ENCODE measurements at regions of chr7 and their contacts with region 1.

Region 1: DNA sequence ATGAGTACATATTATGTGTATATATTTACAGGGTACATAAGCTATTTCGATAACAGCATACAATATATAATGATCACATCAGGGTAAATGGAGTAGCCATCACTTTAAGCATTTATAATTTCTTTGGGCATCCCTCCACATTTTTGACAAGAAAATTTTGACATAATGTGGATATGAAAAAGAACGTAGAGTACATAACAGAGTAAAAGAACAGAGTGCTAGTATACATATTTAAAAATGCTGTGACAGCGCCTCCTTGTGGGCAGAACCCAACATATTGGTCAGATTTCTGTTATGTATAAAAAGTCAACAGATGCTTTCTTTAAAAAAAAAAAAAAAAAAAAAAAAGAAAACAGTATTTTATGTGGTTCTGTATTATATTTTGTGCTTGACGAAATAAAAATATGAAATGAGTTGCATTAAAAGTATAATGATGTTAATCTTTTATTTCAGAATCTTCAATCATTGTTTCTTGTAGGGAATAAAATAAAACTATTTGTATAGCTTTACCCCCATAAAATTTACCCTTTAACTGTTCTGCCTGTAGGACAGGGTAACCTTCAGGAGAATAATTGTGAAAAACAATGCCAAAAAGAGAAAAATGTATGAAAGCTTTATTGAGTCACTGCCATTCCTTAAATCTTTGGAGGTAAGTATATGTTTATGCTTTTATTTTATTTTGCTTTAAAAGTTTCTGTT is 18.3 kb upstream of the HBP1 start:
- H3K4me3 Mint-ChIP-seq: no peak overlapping the region
- H3K27ac Mint-ChIP-seq: no peak overlapping the region
- H3K4me1 Mint-ChIP-seq: no peaks in the 10 kb centered on the region
- H3K27me3 Mint-ChIP-seq: no peaks in the 10 kb centered on the region

Region 2: DNA sequence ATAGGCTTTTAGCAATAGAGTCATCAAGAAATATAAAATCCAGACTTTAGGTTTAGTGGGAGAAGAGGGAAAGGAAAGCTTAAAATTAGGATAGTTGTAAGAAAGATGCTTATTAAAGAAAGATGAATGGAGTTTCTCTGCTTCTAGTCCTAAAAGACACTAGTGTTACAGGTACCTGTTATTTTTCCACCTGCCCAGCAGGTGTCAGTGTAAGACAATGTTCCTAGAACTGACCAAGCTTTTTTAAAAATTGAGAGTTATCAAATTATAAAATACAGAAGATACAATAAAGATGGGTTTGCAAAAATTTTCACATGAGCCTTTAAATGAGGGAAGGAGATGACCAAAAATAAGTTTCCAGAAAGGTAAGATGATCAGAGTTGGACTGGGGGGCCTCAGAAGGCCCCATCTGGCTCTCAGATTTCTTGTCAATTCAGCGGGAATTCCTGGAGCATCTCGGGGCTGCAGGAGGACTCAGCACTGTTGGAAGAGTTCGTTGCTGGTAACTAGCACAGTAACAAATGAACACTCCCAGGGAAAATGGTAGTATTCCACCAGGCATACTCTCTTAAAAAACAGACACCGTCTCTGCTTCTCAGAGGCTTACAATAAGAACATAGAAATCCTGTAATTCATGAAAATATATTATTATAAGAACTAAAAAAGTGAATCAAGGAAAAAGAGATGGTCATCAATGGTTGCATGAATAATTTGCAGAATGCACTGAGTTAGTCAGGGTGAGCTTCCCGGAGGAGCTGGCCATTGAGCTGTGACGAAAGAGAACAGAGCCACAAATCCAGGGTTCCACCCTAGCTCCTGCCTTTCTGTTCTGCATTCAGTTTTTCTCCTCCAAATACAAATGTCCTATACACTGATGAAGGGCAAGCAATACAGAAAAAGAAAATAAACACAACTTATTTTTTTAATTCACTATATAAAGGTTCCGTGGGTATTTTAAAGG is 357.2 kb before region 1 on chr7:
- intact Hi-C with region 1: loop called (anchors 5 kb)
- H3K4me3 Mint-ChIP-seq: no peak overlapping the region
- H3K27ac Mint-ChIP-seq: no peak overlapping the region
- H3K4me1 Mint-ChIP-seq: no peaks in the 10 kb centered on the region
- H3K27me3 Mint-ChIP-seq: peaks cover 6% of the 10 kb centered on the region

Region 3: DNA sequence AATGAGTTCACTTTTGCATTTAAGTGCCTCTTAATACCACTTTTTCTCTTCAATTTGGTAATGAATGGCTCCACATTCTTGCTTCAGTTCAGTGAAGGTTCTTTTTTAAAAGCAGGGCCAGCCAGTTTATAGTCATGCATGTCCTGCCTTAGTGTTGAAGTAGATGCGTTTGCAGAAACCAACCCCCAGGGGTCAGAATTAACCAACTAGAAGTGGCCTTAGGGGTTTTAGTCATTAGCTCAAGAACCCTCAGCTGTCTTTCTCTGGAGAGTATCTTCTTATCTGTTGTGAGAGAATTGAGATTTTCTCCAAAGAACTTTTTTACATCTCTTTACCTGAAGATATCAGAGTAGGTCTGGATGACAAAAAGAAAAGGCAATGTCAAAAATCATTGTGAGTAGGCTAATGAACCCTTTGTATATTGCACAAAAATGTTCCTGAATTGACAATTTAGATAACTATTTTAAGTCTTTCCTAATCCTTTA is 203.2 kb before region 1 on chr7:
- intact Hi-C with region 1: loop called (anchors 1 kb)
- H3K4me3 Mint-ChIP-seq: no peak overlapping the region
- H3K27ac Mint-ChIP-seq: no peak overlapping the region
- H3K4me1 Mint-ChIP-seq: peaks cover 17% of the 10 kb centered on the region
- H3K27me3 Mint-ChIP-seq: no peaks in the 10 kb centered on the region

Region 4: DNA sequence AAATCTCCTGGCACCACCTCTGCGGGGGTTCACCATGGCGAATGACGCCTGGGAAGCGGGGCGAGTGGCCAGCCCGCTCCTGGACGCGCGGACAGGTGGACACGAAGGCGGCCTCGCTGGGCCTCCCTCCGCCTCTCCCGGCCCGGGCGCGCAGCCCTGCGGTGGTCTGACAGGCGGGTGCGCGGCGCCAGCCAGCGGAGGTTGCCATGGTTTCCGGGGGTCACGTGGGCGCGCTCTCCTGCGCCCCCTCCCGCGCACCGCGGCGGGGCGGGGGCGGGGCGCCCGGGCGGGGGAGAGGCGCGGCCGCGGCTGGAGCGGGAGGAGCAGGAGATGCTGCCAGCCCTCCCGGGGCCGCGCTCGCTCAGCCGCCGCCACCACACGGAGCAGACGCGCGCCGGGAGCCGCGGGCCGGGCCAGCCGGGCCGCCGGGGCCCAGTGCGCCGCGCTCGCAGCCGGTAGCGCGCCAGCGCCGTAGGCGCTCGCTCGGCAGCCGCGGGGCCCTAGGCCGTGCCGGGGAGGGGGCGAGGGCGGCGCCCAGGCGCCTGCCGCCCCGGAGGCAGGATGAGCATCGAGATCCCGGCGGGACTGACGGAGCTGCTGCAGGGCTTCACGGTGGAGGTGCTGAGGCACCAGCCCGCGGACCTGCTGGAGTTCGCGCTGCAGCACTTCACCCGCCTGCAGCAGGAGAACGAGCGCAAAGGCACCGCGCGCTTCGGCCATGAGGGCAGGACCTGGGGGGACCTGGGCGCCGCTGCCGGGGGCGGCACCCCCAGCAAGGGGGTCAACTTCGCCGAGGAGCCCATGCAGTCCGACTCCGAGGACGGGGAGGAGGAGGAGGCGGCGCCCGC is 106.0 kb before region 1 on chr7 and contains the start of gene PRKAR2B:
- intact Hi-C with region 1: loop called (anchors 10 kb)
- H3K4me3 Mint-ChIP-seq: peak within 1 kb of the TSS; percentile 97
- H3K27ac Mint-ChIP-seq: peak within 1 kb of the TSS; percentile 86
- H3K4me1 Mint-ChIP-seq: peaks cover 34% of the 10 kb centered on the region
- H3K27me3 Mint-ChIP-seq: peaks cover 3% of the 10 kb centered on the region

Measured in dendritic cell treated with granulocyte-macrophage colony-stimulating factor and Interleukin-4, amounts not matched to agents 40 ng/mL and 50 ng/mL, for 4 days (primary cell).